ENCODE measurements at regions of chr19 and their contacts with region 1.

Region 1: DNA sequence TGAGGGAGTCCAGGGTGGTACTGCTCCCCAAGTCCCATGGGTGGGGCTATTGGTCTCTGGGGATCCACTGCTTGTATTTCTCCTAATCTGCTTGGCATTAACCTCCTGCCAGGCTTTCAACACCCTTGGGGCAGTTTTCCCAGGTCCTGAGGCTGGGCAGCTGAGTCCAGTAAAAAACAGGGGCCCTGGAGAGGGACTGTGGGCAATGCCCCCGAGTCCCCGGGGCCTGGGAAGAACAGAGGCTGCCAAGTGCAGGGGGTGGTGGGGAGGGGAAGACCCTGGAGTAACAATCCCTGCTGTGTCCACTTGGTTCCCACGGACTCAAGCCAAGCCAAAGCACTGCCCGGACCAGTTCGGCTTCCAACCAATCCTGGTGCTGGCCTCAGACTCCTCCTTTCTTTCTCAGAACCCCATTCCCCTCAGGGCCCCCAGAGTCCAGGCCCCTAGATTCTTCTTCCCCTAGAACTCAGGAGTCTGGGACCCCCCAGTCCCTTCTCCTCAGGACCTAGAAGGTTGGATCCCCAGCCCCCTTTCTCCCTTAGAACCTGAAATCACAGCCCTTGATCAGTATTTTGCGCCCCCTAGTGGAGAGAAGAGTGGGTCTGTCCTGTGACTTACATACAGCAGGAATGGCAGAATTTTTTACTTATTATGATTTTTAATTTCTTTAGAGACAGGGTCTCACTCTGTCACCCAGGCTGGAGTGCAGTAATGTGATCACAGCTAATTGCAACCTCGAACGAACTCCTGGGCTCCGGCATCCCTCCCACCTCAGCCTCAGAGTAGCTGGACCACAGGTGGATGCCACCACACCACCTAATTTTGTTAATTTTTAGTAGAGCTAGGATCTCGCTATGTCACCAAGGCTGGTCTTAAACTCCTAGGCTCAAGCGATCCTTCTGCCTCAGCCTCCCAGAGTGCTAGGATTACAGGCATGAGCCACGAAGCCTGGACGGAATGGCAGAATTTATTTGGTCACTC is 3.7 kb upstream of the CLPTM1 start:
- DNase-seq: no peak

Region 2: DNA sequence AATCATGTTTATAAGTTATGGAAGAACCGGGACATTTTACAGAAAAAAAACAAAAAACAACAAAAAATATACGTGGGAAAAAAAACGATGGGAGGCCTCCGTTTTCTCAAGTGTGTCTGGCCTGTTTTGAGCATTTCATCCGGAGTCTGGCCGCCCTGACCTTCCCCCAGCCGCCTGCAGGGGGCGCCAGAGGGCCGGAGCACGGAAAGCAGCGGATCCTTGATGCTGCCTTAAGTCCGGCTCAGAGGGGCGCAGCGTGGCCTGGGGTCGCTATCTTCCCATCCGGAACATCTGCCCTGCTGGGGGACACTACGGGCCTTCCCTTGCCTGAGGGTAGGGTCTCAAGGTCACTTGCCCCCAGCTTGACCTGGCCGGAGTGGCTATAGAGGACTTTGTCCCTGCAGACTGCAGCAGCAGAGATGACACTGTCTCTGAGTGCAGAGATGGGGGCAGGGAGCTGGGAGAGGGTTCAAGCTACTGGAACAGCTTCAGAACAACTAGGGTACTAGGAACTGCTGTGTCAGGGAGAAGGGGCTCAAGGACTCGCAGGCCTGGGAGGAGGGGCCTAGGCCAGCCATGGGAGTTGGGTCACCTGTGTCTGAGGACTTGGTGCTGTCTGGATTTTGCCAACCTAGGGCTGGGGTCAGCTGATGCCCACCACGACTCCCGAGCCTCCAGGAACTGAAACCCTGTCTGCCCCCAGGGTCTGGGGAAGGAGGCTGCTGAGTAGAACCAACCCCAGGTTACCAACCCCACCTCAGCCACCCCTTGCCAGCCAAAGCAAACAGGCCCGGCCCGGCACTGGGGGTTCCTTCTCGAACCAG is 47.7 kb before region 1 on chr19:
- intact Hi-C with region 1: loop called in 1 of 2 experiments (anchors 2 kb)
- DNase-seq: peak; percentile 93

Region 3: GRCh38 chr19:44984005-44984404 is 32.5 kb after region 1 on chr19:
- intact Hi-C with region 1: loop called in 1 of 2 experiments (anchors 1 kb)
- DNase-seq: no peak

Measured in posterior vena cava (tissue), 2 donors.